Left lung (tissue), 14 donors: ENCODE measurements at regions of chr11 and their contacts with region 1.

Region 1: DNA sequence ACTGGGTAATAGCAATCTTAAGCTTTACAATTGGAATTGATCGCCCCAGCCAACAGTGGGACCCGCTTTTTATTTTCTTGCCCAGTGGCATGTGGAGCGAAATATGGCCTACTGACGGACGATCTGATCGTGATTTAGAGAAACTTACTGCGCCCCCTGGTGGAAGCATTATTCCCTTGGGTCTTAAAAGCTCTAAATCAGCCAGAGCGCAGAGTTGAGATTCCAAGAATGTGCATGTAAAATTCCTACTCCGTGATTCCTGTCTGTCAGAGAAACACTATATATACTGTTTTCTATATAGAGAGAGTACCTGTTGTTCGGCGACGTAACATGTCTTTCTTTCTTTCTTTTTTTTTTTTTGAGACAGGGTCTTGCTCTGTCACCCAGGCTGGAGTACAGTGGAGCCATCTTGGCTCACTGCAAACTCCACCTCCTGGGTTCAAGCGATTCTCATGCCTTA is 3.7 kb upstream of the DPF2 start:
- DNase-seq: peak; percentile 9 to 92 (median 82)
- ATAC-seq: peak; percentile 50
- H3K4me3 ChIP-seq: no peak overlapping the region
- H3K27ac ChIP-seq: no peak overlapping the region
- H3K4me1 ChIP-seq: peaks cover 7 to 17% of the 10 kb centered on the region in 2 donors
- H3K27me3 ChIP-seq: no peaks in the 10 kb centered on the region
- CTCF ChIP-seq: peak; percentile 81 to 82

Region 2: GRCh38 chr11:65180877-65181568 is 149.0 kb before region 1 on chr11:
- intact Hi-C with region 1: no loop called
- DNase-seq: peak; percentile 45 to 91 (median 68)
- ATAC-seq: peak; percentile 47
- H3K4me3 ChIP-seq: peak overlapping the region; percentile 88 to 94
- H3K27ac ChIP-seq: peak overlapping the region; percentile 73 to 92
- H3K4me1 ChIP-seq: peaks cover 4 to 37% of the 10 kb centered on the region in 2 donors
- H3K27me3 ChIP-seq: no peaks in the 10 kb centered on the region
- CTCF ChIP-seq: peak; percentile 35 to 60

Region 3: GRCh38 chr11:65262776-65263175 is 67.2 kb before region 1 on chr11:
- intact Hi-C with region 1: no loop called
- DNase-seq: no peak
- ATAC-seq: no peak
- H3K4me3 ChIP-seq: peak overlapping the region; percentile 82 to 85
- H3K27ac ChIP-seq: peak overlapping the region; percentile 88 to 94
- H3K4me1 ChIP-seq: peaks cover 7 to 32% of the 10 kb centered on the region in 2 donors
- H3K27me3 ChIP-seq: no peaks in the 10 kb centered on the region
- CTCF ChIP-seq: no peak

Region 4: DNA sequence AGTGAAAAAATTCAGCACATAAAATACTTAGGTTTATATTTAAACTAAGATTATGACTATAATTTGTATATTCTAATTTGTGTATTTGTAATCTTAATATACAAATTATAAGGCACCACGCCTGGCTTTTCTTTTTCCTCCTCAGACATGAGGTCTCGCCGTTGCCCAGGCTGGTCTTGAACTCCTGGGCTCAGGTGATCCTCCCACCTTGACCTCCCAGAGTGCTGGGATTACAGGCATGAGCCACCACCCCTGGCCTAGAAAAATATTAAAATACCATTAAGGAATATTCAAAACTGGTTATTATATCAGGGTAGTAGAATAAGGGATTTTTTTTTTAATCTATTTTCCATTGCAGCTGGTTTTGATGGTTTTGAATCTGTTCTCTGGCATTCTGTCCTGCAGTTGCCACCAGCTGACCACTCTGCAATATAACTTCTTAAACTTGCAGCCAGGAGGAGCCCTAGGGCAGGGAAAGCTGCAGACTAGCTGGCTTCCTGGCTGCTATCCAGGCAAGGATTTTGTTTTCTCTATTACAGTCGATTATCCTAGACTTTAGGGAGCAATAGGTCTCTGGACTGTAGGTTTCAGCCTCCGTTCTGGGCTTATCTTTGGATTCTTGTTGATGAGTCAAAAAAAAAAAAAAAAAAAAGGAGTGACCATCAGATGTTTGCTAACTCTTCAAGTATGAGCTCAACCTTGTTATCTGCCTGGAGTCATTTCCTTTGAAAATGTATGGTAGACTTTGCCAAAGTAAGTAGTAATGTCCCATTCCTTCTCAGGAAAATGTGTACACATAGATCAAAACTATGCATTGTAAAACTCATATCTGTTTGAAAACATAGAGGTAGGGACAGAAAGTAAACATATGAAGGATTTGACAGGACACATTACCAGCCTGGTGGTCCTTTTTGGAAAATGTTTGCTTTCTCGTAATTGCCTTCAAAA is 55.0 kb before region 1 on chr11:
- intact Hi-C with region 1: loop called (anchors 5 to 10 kb)
- DNase-seq: peak in 3 of 4 donors; percentile 70 to 87 (median 82)
- ATAC-seq: peak; percentile 95
- H3K4me3 ChIP-seq: no peak overlapping the region
- H3K27ac ChIP-seq: peak overlapping the region; percentile 21 to 30
- H3K4me1 ChIP-seq: peaks cover 10 to 33% of the 10 kb centered on the region in 2 donors
- H3K27me3 ChIP-seq: no peaks in the 10 kb centered on the region
- CTCF ChIP-seq: peak; percentile 73 to 79